Activated T-helper 2 cell treated with anti-CD3 and anti-CD28 coated beads, Interferon-gamma antibody, Interleukin-2, Interleukin-4, amounts not matched to agents 10 μg/mL and 5 μg/mL and 100 μg/mL, durations not matched to agents 14 hours and 24 hours and 36 hours (primary cell): ENCODE measurements at regions of chr1 and their contacts with region 1.

Region 1: DNA sequence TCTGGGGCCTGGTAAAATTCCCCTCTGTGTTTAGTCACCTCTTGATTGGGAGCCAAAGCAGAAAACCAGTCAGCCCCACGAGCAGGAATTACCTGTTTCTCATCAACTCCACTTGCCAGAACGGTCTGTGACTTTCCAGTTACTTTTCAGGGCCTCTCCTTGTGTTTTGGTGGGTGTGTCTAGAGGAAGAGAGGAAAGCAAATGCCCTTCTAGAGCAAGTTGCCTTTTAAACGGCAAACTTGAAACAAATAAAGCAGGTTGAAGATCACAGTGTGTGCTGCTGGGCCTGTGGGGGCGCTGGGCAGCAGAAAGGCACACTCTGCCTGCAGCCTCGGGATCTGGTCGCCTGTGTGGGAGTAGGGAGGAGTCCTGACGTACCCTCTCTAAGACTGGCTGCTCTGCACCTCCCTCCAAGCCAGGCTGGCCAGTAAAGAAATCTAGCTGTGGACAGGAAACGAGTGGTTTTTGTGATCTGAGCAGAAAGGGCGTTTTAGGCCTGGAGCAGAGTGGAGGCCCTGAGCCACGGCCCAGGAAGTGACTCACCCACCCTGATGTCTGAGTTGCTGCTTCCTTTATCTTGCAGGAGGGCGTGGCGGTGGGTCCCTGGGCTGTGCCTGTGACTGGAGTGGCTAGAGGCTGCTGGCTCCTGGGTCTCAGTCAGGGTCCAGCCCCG is 11.1 kb upstream of the S100A11 start:
- DNase-seq: peak; percentile 88
- H3K4me3 Mint-ChIP-seq: peak overlapping the region; percentile 71
- H3K27ac Mint-ChIP-seq: peak overlapping the region; percentile 95
- H3K4me1 Mint-ChIP-seq: peaks cover 31% of the 10 kb centered on the region
- H3K27me3 Mint-ChIP-seq: peaks cover 2% of the 10 kb centered on the region

Region 2: GRCh38 chr1:151867785-151868411 is 180.0 kb before region 1 on chr1:
- intact Hi-C with region 1: no loop called
- DNase-seq: no peak
- H3K4me3 Mint-ChIP-seq: no peak overlapping the region
- H3K27ac Mint-ChIP-seq: no peak overlapping the region
- H3K4me1 Mint-ChIP-seq: peaks cover 5% of the 10 kb centered on the region
- H3K27me3 Mint-ChIP-seq: no peaks in the 10 kb centered on the region

Region 3: GRCh38 chr1:152024158-152024557 is 23.7 kb before region 1 on chr1:
- intact Hi-C with region 1: no loop called
- DNase-seq: no peak
- H3K4me3 Mint-ChIP-seq: no peak overlapping the region
- H3K27ac Mint-ChIP-seq: no peak overlapping the region
- H3K4me1 Mint-ChIP-seq: peaks cover 6% of the 10 kb centered on the region
- H3K27me3 Mint-ChIP-seq: peaks cover 7% of the 10 kb centered on the region

Region 4: GRCh38 chr1:152034646-152035405 is 13.0 kb before region 1 on chr1:
- intact Hi-C with region 1: loop called (anchors 1 kb)
- DNase-seq: peak; percentile 66
- H3K4me3 Mint-ChIP-seq: peak overlapping the region; percentile 99
- H3K27ac Mint-ChIP-seq: peak overlapping the region; percentile 97
- H3K4me1 Mint-ChIP-seq: peaks cover 33% of the 10 kb centered on the region
- H3K27me3 Mint-ChIP-seq: no peaks in the 10 kb centered on the region

Region 5: GRCh38 chr1:152110860-152111514 is 63.1 kb after region 1 on chr1:
- intact Hi-C with region 1: loop called (anchors 5 kb)
- DNase-seq: peak; percentile 29
- H3K4me3 Mint-ChIP-seq: no peak overlapping the region
- H3K27ac Mint-ChIP-seq: no peak overlapping the region
- H3K4me1 Mint-ChIP-seq: peaks cover 2% of the 10 kb centered on the region
- H3K27me3 Mint-ChIP-seq: peaks cover 3% of the 10 kb centered on the region

Region 6: GRCh38 chr1:152141974-152142584 is 94.2 kb after region 1 on chr1:
- intact Hi-C with region 1: loop called (anchors 2 kb)
- DNase-seq: no peak
- H3K4me3 Mint-ChIP-seq: no peak overlapping the region
- H3K27ac Mint-ChIP-seq: no peak overlapping the region
- H3K4me1 Mint-ChIP-seq: peaks cover 5% of the 10 kb centered on the region
- H3K27me3 Mint-ChIP-seq: peaks cover 37% of the 10 kb centered on the region

Region 7: DNA sequence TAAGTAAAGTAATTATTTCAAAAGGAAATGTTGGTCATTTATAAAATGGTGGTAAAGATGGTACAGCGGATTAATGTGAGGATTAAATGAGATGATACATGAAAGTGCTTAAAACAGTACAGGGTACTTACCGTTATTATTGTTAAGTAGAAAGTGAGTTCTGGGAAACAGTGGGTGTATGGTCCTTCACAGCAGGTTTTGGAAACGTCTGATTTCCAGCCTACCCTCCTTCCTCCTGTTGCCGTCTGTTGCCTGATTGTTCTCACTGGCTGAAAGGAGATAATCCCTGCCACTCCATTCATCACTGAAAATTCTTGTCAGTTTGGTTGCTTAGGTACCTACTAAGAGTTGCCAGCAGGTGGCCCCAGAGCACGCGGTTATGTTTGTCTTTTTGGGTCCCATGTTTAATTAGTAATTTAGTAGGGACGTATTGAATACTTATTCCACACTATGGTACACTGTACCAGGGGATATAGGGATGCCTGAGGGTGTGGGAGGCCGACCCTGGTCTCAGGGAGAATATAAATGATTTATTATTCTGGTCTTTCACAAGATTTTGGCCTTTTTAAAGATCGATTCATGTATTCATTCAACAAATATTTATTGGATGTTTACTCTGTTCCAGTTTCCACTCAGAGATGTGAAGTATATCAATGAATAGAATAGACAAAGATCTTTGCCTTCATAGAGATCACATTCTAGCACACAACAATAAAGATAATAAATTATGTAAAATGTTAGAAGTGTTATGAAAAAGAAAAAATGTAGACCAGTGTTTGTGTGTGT is 142.0 kb after region 1 on chr1:
- intact Hi-C with region 1: loop called (anchors 1 kb)
- DNase-seq: peak; percentile 48
- H3K4me3 Mint-ChIP-seq: peak overlapping the region; percentile 51
- H3K27ac Mint-ChIP-seq: no peak overlapping the region
- H3K4me1 Mint-ChIP-seq: peaks cover 4% of the 10 kb centered on the region
- H3K27me3 Mint-ChIP-seq: peaks cover 50% of the 10 kb centered on the region

Region 8: DNA sequence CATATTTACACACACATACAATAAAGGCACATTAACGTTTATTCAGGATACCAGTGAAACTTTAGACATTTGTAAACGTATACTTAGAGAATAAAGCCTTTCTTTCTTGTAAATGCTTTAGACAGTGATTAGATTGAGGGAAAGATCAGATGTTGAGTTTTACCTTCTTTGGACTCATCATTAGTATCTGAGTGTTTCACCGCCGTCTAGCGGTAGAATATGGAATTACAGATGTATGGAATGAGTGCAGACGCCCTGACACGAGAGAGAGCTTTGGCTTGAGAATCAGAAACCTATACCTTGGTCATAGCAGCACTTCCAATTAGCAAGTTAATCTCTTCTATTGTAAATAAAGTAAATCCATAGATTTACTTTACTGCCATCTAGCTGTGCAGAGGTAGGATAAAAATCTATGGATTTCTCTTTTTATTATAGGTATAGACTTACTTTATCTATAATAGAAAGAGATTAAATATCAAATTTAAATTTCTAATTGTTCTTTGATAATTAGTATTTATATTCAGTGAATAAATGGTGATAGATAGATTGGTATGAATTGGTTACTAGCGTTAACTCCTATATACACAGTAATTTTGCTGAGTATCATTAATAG is 299.4 kb after region 1 on chr1:
- intact Hi-C with region 1: loop called (anchors 5 kb)
- DNase-seq: peak; percentile 16
- H3K4me3 Mint-ChIP-seq: no peak overlapping the region
- H3K27ac Mint-ChIP-seq: no peak overlapping the region
- H3K4me1 Mint-ChIP-seq: no peaks in the 10 kb centered on the region
- H3K27me3 Mint-ChIP-seq: peaks cover 31% of the 10 kb centered on the region

Region 9: GRCh38 chr1:152459596-152460528 is 412.0 kb after region 1 on chr1:
- intact Hi-C with region 1: loop called (anchors 2 kb)
- DNase-seq: peak; percentile 63
- H3K4me3 Mint-ChIP-seq: peak overlapping the region; percentile 34
- H3K27ac Mint-ChIP-seq: peak overlapping the region; percentile 76
- H3K4me1 Mint-ChIP-seq: peaks cover 27% of the 10 kb centered on the region
- H3K27me3 Mint-ChIP-seq: peaks cover 10% of the 10 kb centered on the region